ENCODE measurements at regions of chr17 and their contacts with region 1.

Region 1: GRCh38 chr17:51046514-51047384 is 73.9 kb downstream of the SPAG9 start:
- DNase-seq: no peak

Region 2: GRCh38 chr17:50986989-50987660 is 59.6 kb before region 1 on chr17:
- intact Hi-C with region 1: loop called in 1 of 2 experiments (anchors 10 kb)
- DNase-seq: no peak